ENCODE measurements at regions of chr6 and their contacts with region 1.

Region 1: GRCh38 chr6:12296255-12296573 is 6.1 kb downstream of the EDN1 start:
- DNase-seq: peak in 1 of 2 donors; percentile 59
- ATAC-seq: peak; percentile 49
- H3K4me3 ChIP-seq: peak overlapping the region in 1 of 2 donors; percentile 34
- H3K27ac ChIP-seq: peak overlapping the region in 1 of 2 donors; percentile 99
- H3K4me1 ChIP-seq: peaks cover 0 to 4% of the 10 kb centered on the region in 2 donors
- H3K27me3 ChIP-seq: no peaks in the 10 kb centered on the region

Region 2: GRCh38 chr6:11607383-11607782 is 688.8 kb before region 1 on chr6:
- intact Hi-C with region 1: no loop called
- DNase-seq: peak in 1 of 2 donors; percentile 56
- ATAC-seq: peak; percentile 49
- H3K4me3 ChIP-seq: no peak overlapping the region
- H3K27ac ChIP-seq: peak overlapping the region in 1 of 2 donors; percentile 65
- H3K4me1 ChIP-seq: peaks cover 6 to 10% of the 10 kb centered on the region in 2 donors
- H3K27me3 ChIP-seq: no peaks in the 10 kb centered on the region

Region 3: DNA sequence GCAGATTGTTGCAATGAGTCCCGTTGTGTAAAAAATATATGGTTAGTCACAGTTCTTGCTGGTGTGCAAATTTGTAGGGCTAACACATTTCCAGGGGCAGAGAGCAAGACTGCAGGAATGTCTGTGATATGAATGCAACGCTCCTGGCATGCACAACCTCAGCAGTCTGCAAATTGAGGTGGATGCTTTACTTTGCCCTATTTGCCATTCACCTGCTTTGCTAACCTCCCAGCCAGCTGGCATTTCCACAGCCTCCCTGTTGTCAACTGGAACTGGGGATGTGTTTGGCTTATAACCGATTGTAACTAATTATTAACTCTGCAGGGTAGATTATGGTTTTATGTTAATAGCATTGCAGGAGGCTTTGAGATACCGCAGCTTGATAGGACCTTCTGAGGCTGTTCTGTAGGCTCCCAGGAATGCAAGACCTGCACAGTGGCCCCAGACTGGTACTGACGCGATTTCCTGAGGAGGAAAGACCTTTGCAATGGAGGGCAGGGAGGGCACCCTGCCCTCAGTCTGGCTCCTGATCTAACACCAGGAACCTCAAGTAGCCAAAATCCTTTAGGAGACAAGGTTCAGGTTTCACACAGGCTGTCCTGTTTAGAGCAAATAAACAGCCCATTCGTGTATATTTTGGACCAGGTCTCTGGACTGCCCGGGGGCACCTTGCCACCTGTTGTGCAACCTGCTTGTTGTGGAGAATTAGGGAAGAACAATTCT is 47.4 kb after region 1 on chr6:
- intact Hi-C with region 1: loop called (anchors 5 to 10 kb)
- DNase-seq: no peak
- ATAC-seq: no peak
- H3K4me3 ChIP-seq: no peak overlapping the region
- H3K27ac ChIP-seq: peak overlapping the region; percentile 43 to 57
- H3K4me1 ChIP-seq: peaks cover 3 to 6% of the 10 kb centered on the region in 2 donors
- H3K27me3 ChIP-seq: no peaks in the 10 kb centered on the region

Region 4: GRCh38 chr6:12490904-12491571 is 194.8 kb after region 1 on chr6:
- intact Hi-C with region 1: loop called in 1 of 2 experiments (anchors 5 kb)
- DNase-seq: peak in 1 of 2 donors; percentile 75
- ATAC-seq: peak; percentile 83
- H3K4me3 ChIP-seq: no peak overlapping the region
- H3K27ac ChIP-seq: peak overlapping the region; percentile 45 to 59
- H3K4me1 ChIP-seq: peaks cover 2 to 10% of the 10 kb centered on the region in 2 donors
- H3K27me3 ChIP-seq: no peaks in the 10 kb centered on the region

Region 5: GRCh38 chr6:12648171-12648570 is 352.0 kb after region 1 on chr6:
- intact Hi-C with region 1: no loop called
- DNase-seq: no peak
- ATAC-seq: no peak
- H3K4me3 ChIP-seq: no peak overlapping the region
- H3K27ac ChIP-seq: no peak overlapping the region
- H3K4me1 ChIP-seq: no peaks in the 10 kb centered on the region
- H3K27me3 ChIP-seq: no peaks in the 10 kb centered on the region

Region 6: DNA sequence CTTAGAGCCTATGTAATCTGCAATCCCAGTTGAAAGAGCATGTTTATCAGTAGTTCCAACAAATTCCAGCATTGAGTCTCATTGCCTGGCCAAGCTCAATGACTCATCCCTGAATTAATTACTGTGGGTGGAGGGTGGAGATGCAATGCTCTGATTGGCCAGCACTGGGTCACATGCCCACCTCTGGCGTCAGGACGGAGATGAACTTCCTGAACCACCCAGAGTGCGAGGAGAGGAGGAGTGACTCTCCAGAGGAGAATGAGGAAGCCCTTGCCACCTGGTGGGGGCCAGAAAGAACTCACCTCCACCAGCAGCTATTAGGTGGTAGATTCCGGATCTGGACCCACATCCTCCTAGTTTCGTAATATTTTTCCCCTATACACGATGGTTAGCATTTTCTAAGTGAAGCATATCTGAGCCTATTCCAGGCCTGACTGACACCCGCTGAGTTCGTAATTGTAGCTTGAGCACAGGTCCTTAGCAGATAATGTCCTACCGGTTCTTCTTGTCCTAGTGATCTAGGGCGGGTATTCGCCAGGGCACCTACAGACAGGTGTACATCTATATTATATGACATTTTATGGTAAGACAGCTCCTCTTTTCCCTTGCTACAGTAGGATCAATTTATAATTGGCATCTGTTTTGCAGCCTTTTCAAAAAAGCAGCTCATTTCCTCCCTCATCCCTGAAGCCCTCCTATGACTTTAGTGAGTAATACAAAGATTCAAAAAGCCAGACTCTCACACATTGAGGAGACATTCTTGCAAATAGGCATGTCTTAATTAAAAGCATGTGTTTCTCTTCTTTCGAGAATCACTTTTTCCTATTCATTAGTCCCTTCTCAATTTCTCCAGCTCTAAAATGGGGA is 748.4 kb after region 1 on chr6:
- intact Hi-C with region 1: no loop called
- DNase-seq: peak in 1 of 2 donors; percentile 73
- ATAC-seq: no peak
- H3K4me3 ChIP-seq: no peak overlapping the region
- H3K27ac ChIP-seq: no peak overlapping the region
- H3K4me1 ChIP-seq: peaks cover 2 to 5% of the 10 kb centered on the region in 2 donors
- H3K27me3 ChIP-seq: no peaks in the 10 kb centered on the region